CD4-positive, alpha-beta memory T cell (primary cell): ENCODE measurements at regions of chr19 and their contacts with region 1.

Region 1: GRCh38 chr19:29694669-29695627 is 20.1 kb downstream of the C19orf12 start:
- DNase-seq: peak; percentile 75 to 82 (median 78)
- H3K4me3 ChIP-seq: no peak overlapping the region
- H3K4me3 Mint-ChIP-seq: no peak overlapping the region
- H3K27ac ChIP-seq: no peak overlapping the region
- H3K27ac Mint-ChIP-seq: peak overlapping the region; percentile 58 to 89 (median 78)
- H3K4me1 ChIP-seq: peaks cover 12% of the 10 kb centered on the region
- H3K4me1 Mint-ChIP-seq: peaks cover 7 to 30% (median 12%) of the 10 kb centered on the region in 4 donors
- H3K27me3 ChIP-seq: no peaks in the 10 kb centered on the region
- H3K27me3 Mint-ChIP-seq: no peaks in the 10 kb centered on the region

Region 2: DNA sequence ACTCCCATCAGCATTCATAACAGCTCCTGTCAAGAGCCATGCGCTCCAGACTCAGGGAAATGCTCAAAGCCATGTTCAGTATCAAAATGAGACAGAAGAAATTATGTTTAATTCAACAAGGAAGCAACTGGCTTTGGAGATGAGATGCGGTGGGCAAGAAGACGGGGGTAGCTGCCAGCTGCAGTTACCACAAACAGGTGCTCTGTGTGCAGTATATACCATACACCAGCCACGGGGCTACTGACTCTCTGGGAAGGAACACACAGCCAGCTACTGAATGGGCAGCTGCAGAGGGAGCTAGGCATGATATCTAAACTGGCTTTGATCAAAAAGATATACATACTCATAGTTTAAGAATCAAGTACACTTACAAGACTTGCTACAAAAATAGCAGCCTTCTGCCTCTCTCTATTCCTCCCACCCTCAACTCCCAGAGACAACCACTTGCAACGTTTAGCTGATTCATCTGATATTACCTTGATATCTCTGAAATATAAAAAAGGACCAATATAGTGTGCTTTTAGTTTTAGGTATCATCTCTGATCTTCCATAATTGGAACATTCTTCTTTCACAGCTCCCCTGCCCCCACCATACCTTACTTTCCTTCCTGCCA is 1075.0 kb before region 1 on chr19:
- CTCF ChIA-PET with region 1: no interaction called
- POLR2A ChIA-PET with region 1: no interaction called
- intact Hi-C with region 1: no loop called
- DNase-seq: no peak
- H3K4me3 ChIP-seq: no peak overlapping the region
- H3K4me3 Mint-ChIP-seq: no peak overlapping the region
- H3K27ac ChIP-seq: no peak overlapping the region
- H3K27ac Mint-ChIP-seq: no peak overlapping the region
- H3K4me1 ChIP-seq: no peaks in the 10 kb centered on the region
- H3K4me1 Mint-ChIP-seq: no peaks in the 10 kb centered on the region
- H3K27me3 ChIP-seq: no peaks in the 10 kb centered on the region
- H3K27me3 Mint-ChIP-seq: no peaks in the 10 kb centered on the region

Region 3: DNA sequence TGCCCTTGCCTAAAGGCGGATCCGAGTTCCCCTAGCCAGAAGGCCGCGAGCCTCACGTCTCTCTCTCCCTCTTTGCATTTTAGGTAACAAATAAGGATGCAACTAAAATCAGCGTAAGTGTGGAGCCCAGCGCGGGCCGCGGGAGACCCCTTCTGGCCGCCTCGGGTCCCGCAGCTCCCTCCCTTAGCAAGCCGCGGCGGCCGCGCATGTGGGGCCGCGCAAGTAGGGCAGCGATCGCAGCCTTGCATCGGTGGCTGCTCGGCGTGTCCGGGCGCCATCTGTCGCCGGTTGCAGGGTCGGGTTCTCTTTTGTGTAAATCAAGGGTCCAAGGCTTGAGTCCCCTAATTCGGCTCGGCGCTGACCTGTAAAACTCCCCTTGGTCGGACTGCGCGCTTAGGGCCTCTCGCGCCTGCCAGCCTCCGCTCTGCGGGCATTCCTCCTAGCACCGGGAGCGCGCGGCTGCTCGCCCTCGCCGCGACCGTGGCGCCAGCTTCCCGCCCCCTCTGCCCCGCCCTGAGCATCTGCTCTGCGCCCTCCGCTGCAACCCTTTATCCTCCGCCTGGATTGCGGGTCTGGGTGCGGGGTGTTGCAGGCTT is 166.5 kb before region 1 on chr19:
- CTCF ChIA-PET with region 1: no interaction called
- POLR2A ChIA-PET with region 1: no interaction called
- intact Hi-C with region 1: loop called (anchors 5 kb)
- DNase-seq: peak in 4 of 5 donors; percentile 11 to 26 (median 20)
- H3K4me3 ChIP-seq: no peak overlapping the region
- H3K4me3 Mint-ChIP-seq: peak overlapping the region in 7 of 8 donors; percentile 8 to 78 (median 63)
- H3K27ac ChIP-seq: no peak overlapping the region
- H3K27ac Mint-ChIP-seq: no peak overlapping the region
- H3K4me1 ChIP-seq: peaks cover 25% of the 10 kb centered on the region
- H3K4me1 Mint-ChIP-seq: peaks cover 7 to 29% (median 17%) of the 10 kb centered on the region in 4 donors
- H3K27me3 ChIP-seq: peaks cover 4% of the 10 kb centered on the region
- H3K27me3 Mint-ChIP-seq: peaks cover 43 to 45% of the 10 kb centered on the region in 2 donors

Region 4: GRCh38 chr19:29665215-29665825 is 29.6 kb before region 1 on chr19 and contains the start of gene PLEKHF1:
- CTCF ChIA-PET with region 1: interaction called, 158 read pairs
- POLR2A ChIA-PET with region 1: interaction called, 33 read pairs
- intact Hi-C with region 1: loop called (anchors 1 kb)
- DNase-seq: peak; percentile 73 to 88 (median 78)
- H3K4me3 ChIP-seq: peak within 1 kb of the TSS; percentile 77 to 83
- H3K4me3 Mint-ChIP-seq: peak within 1 kb of the TSS; percentile 89 to 98 (median 93)
- H3K27ac ChIP-seq: peak within 1 kb of the TSS; percentile 92
- H3K27ac Mint-ChIP-seq: peak within 1 kb of the TSS; percentile 92 to 100 (median 96)
- H3K4me1 ChIP-seq: peaks cover 42% of the 10 kb centered on the region
- H3K4me1 Mint-ChIP-seq: peaks cover 24 to 62% (median 38%) of the 10 kb centered on the region in 4 donors
- H3K27me3 ChIP-seq: no peaks in the 10 kb centered on the region
- H3K27me3 Mint-ChIP-seq: no peaks in the 10 kb centered on the region
- total RNA-seq, gene PLEKHF1: 31.2 to 32.4 TPM

Region 5: GRCh38 chr19:29680447-29680846 is 14.5 kb before region 1 on chr19:
- CTCF ChIA-PET with region 1: interaction called, 13 read pairs
- POLR2A ChIA-PET with region 1: interaction called, 5 read pairs
- intact Hi-C with region 1: no loop called
- DNase-seq: peak; percentile 81 to 88 (median 88)
- H3K4me3 ChIP-seq: peak overlapping the region in 1 of 2 donors; percentile 26
- H3K4me3 Mint-ChIP-seq: peak overlapping the region; percentile 71 to 88 (median 75)
- H3K27ac ChIP-seq: peak overlapping the region; percentile 49
- H3K27ac Mint-ChIP-seq: peak overlapping the region; percentile 85 to 96 (median 93)
- H3K4me1 ChIP-seq: peaks cover 76% of the 10 kb centered on the region
- H3K4me1 Mint-ChIP-seq: peaks cover 37 to 89% (median 67%) of the 10 kb centered on the region in 4 donors
- H3K27me3 ChIP-seq: no peaks in the 10 kb centered on the region
- H3K27me3 Mint-ChIP-seq: no peaks in the 10 kb centered on the region

Region 6: GRCh38 chr19:29714953-29715700 is 20.2 kb after region 1 on chr19 and contains the start of gene C19orf12:
- CTCF ChIA-PET with region 1: interaction called, 278 read pairs
- POLR2A ChIA-PET with region 1: interaction called, 55 read pairs
- intact Hi-C with region 1: loop called (anchors 1 kb)
- DNase-seq: peak in 4 of 5 donors; percentile 53 to 86 (median 80)
- H3K4me3 ChIP-seq: peak within 1 kb of the TSS; percentile 80 to 84
- H3K4me3 Mint-ChIP-seq: peak within 1 kb of the TSS; percentile 88 to 95 (median 92)
- H3K27ac ChIP-seq: peak within 1 kb of the TSS; percentile 88
- H3K27ac Mint-ChIP-seq: peak within 1 kb of the TSS; percentile 95 to 98 (median 98)
- H3K4me1 ChIP-seq: peaks cover 56% of the 10 kb centered on the region
- H3K4me1 Mint-ChIP-seq: peaks cover 41 to 60% (median 52%) of the 10 kb centered on the region in 4 donors
- H3K27me3 ChIP-seq: no peaks in the 10 kb centered on the region
- H3K27me3 Mint-ChIP-seq: no peaks in the 10 kb centered on the region
- total RNA-seq, gene C19orf12: 29.3 to 30.1 TPM

Region 7: GRCh38 chr19:30046522-30046921 is 351.6 kb after region 1 on chr19:
- CTCF ChIA-PET with region 1: no interaction called
- POLR2A ChIA-PET with region 1: no interaction called
- intact Hi-C with region 1: no loop called
- DNase-seq: no peak
- H3K4me3 ChIP-seq: no peak overlapping the region
- H3K4me3 Mint-ChIP-seq: no peak overlapping the region
- H3K27ac ChIP-seq: no peak overlapping the region
- H3K27ac Mint-ChIP-seq: no peak overlapping the region
- H3K4me1 ChIP-seq: no peaks in the 10 kb centered on the region
- H3K4me1 Mint-ChIP-seq: peaks cover 0 to 7% (median 6%) of the 10 kb centered on the region in 4 donors
- H3K27me3 ChIP-seq: no peaks in the 10 kb centered on the region
- H3K27me3 Mint-ChIP-seq: no peaks in the 10 kb centered on the region